Caco-2 (cell line): ENCODE measurements at regions of chr11 and their contacts with region 1.

Region 1: DNA sequence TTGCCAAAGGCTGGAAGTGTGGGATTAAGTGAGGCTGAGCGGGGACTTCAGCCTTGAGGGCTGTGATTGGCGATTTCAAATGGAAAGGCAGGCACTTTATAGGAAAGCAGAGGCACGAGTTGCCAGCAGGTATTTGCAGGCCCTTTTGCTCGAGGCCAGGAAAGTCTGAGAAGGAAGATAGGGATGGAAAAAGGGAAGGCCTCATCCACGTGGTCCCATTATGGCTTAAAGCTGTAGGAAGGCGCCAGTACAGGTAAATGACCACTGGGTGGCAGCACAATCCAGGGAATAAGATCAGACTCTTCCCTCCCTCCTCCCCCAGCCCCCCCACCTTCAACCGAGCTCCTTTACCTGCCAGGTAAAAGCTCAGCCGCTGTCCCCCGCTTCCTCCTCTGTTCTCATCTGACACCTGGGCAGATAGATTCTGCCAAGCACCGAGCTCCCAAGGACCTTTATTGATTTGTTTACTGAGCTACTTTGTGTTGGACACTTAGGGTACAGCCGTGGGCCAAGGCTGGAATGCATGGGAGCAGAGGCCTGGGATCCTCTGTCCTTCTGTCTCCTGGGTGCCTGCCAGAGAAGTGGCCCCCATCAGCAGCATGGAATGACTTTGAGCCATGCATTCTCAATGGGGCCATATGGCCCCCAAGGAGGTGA is 7.5 kb downstream of the P2RX3 start:
- DNase-seq: peak; percentile 76 to 82
- H3K4me3 ChIP-seq: no peak overlapping the region
- H3K4me3 Mint-ChIP-seq: no peak overlapping the region
- H3K27ac Mint-ChIP-seq: no peak overlapping the region
- H3K4me1 ChIP-seq: peaks cover 6% of the 10 kb centered on the region; the same call in 1 of the 2 replicates
- H3K4me1 Mint-ChIP-seq: peaks cover 7% of the 10 kb centered on the region
- H3K27me3 ChIP-seq: no peaks in the 10 kb centered on the region
- H3K27me3 Mint-ChIP-seq: no peaks in the 10 kb centered on the region
- CTCF ChIP-seq: peak; percentile 78 to 86

Region 2: GRCh38 chr11:57335343-57336110 is 10.2 kb before region 1 on chr11 and contains the start of gene SSRP1:
- CTCF ChIA-PET with region 1: interaction called, 10 read pairs
- POLR2A ChIA-PET with region 1: interaction called, 4 read pairs
- intact Hi-C with region 1: no loop called
- DNase-seq: peak; percentile 90 to 92
- H3K4me3 ChIP-seq: peak within 1 kb of the TSS; percentile 65
- H3K4me3 Mint-ChIP-seq: peak within 1 kb of the TSS; percentile 79
- H3K27ac Mint-ChIP-seq: peak within 1 kb of the TSS; percentile 87
- H3K4me1 ChIP-seq: peaks cover 16% of the 10 kb centered on the region
- H3K4me1 Mint-ChIP-seq: peaks cover 22% of the 10 kb centered on the region
- H3K27me3 ChIP-seq: no peaks in the 10 kb centered on the region
- H3K27me3 Mint-ChIP-seq: no peaks in the 10 kb centered on the region
- CTCF ChIP-seq: no peak
- total RNA-seq, gene SSRP1: 206 and 212 TPM in 2 replicates

Region 3: DNA sequence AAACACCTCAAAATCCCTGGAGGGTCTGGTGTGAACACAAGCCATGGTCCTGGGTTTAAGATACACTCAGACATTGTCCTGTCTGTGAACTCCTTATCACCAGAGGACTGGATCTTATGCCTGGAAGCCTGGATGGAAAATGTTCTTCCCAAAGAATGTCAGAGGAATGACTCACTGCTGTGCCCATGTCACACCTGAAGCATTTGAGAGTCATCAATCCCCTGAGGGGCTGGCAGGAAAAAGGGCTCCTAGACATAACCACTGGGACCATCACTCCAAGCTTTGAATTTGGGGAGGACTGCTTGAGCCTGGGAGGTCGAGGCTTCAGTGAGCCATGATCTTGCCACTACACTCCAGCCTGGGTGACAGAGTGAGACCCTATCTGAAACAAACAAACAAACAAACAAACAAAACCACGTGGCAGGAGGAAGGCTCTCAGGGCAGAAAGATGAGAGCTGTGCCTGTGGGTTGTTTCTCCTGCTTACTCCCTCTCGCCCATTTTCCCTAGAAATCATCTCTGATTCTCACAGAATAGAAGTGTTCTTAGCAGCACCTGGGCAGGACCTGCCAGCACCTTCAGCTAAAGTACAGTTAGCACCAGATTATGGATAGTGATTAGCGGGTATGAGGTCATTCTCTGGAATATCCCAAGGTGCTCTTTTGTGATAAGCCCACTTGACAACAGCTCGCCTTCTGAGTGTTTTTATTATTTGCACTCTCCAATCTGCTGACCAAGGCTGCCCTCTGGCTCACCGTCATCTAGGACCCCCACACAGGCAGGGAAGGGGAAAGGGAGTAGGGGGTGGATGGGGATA is 56.7 kb after region 1 on chr11:
- CTCF ChIA-PET with region 1: interaction called, 6 read pairs
- POLR2A ChIA-PET with region 1: no interaction called
- intact Hi-C with region 1: loop called (anchors 5 kb)
- DNase-seq: no peak
- H3K4me3 ChIP-seq: no peak overlapping the region
- H3K4me3 Mint-ChIP-seq: no peak overlapping the region
- H3K27ac Mint-ChIP-seq: no peak overlapping the region
- H3K4me1 ChIP-seq: peaks cover 22% of the 10 kb centered on the region
- H3K4me1 Mint-ChIP-seq: no peaks in the 10 kb centered on the region
- H3K27me3 ChIP-seq: no peaks in the 10 kb centered on the region
- H3K27me3 Mint-ChIP-seq: no peaks in the 10 kb centered on the region
- CTCF ChIP-seq: no peak

Region 4: GRCh38 chr11:57480409-57481137 is 134.9 kb after region 1 on chr11:
- CTCF ChIA-PET with region 1: interaction called, 27 read pairs
- POLR2A ChIA-PET with region 1: no interaction called
- intact Hi-C with region 1: loop called (anchors 1 kb)
- DNase-seq: peak; percentile 73 to 80
- H3K4me3 ChIP-seq: no peak overlapping the region
- H3K4me3 Mint-ChIP-seq: no peak overlapping the region
- H3K27ac Mint-ChIP-seq: peak overlapping the region; percentile 5
- H3K4me1 ChIP-seq: peaks cover 5% of the 10 kb centered on the region; the same call in 1 of the 2 replicates
- H3K4me1 Mint-ChIP-seq: peaks cover 16% of the 10 kb centered on the region
- H3K27me3 ChIP-seq: no peaks in the 10 kb centered on the region
- H3K27me3 Mint-ChIP-seq: no peaks in the 10 kb centered on the region
- CTCF ChIP-seq: peak; percentile 61 to 74

Region 5: GRCh38 chr11:57562596-57562995 is 216.9 kb after region 1 on chr11:
- CTCF ChIA-PET with region 1: interaction called, 7 read pairs
- POLR2A ChIA-PET with region 1: no interaction called
- intact Hi-C with region 1: loop called (anchors 1 kb)
- DNase-seq: peak in 1 of 2 experiments; percentile 53
- H3K4me3 ChIP-seq: no peak overlapping the region
- H3K4me3 Mint-ChIP-seq: no peak overlapping the region
- H3K27ac Mint-ChIP-seq: peak overlapping the region; percentile 19
- H3K4me1 ChIP-seq: peaks cover 6% of the 10 kb centered on the region; the same call in 1 of the 2 replicates
- H3K4me1 Mint-ChIP-seq: peaks cover 7% of the 10 kb centered on the region
- H3K27me3 ChIP-seq: no peaks in the 10 kb centered on the region
- H3K27me3 Mint-ChIP-seq: no peaks in the 10 kb centered on the region
- CTCF ChIP-seq: peak; percentile 26 to 30

Region 6: GRCh38 chr11:58524232-58525036 is 1178.8 kb after region 1 on chr11:
- CTCF ChIA-PET with region 1: no interaction called
- POLR2A ChIA-PET with region 1: no interaction called
- intact Hi-C with region 1: loop called (anchors 10 kb)
- DNase-seq: peak; percentile 60 to 71
- H3K4me3 ChIP-seq: no peak overlapping the region
- H3K4me3 Mint-ChIP-seq: no peak overlapping the region
- H3K27ac Mint-ChIP-seq: no peak overlapping the region
- H3K4me1 ChIP-seq: no peaks in the 10 kb centered on the region
- H3K4me1 Mint-ChIP-seq: no peaks in the 10 kb centered on the region
- H3K27me3 ChIP-seq: no peaks in the 10 kb centered on the region
- H3K27me3 Mint-ChIP-seq: peaks cover 9% of the 10 kb centered on the region
- CTCF ChIP-seq: peak; percentile 56 to 86